Activated CD4-positive, alpha-beta T cell treated with anti-CD3 and anti-CD28 coated beads, Interleukin-2, amount 10 ng/mL, durations not matched to agents 24 days and 14 days (primary cell): ENCODE measurements at regions of chr2 and their contacts with region 1.

Region 1: DNA sequence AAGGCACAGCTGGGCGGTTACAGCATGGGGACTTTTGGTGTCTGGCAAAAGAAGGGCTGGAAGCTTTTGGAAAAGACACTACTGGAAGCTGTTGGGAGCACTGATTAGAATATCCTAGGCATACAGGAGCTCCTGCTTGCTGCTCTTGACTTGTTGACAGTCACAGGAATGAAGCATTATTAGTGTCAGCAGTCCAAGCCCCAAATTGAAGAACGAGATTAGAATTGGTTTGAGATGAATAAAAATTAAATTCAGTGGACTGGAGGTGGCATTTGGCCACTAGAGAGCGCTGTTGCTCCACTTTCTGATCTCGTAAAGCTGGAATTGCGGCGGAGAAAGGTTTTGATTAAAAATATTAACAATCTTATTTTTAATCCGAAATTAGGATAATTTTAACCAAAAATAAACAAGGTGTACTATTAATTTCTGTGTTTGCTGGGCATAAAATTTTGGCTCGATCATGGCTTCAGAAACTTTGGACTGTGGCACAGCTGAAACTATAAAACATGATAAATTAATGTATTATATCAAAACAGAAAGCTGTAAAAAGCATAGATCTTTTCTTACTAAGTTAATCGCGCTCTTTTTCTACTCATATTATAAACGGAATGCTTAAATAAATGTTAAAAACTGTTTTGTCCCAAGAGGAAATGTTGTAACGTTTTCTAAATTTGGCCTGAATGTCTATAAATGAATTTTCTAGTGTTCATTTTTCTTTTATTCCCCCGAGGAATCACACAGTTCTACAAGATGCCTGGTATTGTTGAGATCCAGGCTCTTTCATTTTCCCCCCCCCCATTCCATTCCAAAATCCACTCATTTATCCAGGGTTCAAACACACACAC is 2.4 kb upstream of the HOXD8 start:
- DNase-seq: peak; percentile 87
- H3K4me3 Mint-ChIP-seq: no peak overlapping the region
- H3K27ac Mint-ChIP-seq: no peak overlapping the region
- H3K4me1 Mint-ChIP-seq: peaks cover 8% of the 10 kb centered on the region
- H3K27me3 Mint-ChIP-seq: peaks cover 74% of the 10 kb centered on the region

Region 2: DNA sequence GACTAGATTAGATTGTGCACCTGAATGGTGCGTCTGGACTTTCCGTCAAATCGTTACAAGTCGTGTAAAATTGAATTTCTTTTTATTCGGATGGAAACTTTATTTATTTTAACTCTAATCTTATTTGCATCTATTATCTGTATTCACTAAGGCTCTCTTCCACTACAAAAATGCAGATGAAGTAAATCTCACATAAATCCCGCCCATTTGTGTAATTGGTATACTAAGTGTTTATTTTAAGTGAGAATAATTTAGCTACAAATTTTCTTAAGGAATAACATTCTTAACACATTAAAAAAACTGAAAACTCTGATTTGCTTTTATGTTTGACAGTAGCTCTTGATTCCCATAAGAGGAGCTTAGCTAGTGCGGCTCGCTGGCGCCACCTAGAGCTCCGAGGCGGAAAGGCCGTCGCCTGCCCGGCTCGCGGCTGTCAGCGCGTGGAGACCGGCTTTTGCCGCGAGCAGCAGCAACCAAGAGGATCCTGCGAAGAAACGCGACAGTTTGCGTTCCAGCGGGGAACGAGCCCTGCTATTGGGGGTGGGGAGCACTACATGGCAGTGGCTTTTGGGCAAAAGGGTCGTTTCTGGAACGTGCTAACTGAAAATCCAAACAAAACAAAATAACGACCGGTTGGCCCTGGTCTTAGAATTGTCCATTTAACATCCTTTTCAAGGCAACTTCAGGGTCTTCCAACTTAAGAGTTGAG is 1785.7 kb before region 1 on chr2:
- intact Hi-C with region 1: loop called (anchors 10 kb)
- DNase-seq: peak; percentile 97
- H3K4me3 Mint-ChIP-seq: peak overlapping the region; percentile 62
- H3K27ac Mint-ChIP-seq: peak overlapping the region; percentile 81
- H3K4me1 Mint-ChIP-seq: peaks cover 26% of the 10 kb centered on the region
- H3K27me3 Mint-ChIP-seq: peaks cover 63% of the 10 kb centered on the region

Region 3: GRCh38 chr2:176110975-176111663 is 16.0 kb before region 1 on chr2:
- intact Hi-C with region 1: loop called (anchors 2 kb)
- DNase-seq: no peak
- H3K4me3 Mint-ChIP-seq: no peak overlapping the region
- H3K27ac Mint-ChIP-seq: peak overlapping the region; percentile 12
- H3K4me1 Mint-ChIP-seq: peaks cover 6% of the 10 kb centered on the region
- H3K27me3 Mint-ChIP-seq: peaks cover 76% of the 10 kb centered on the region

Region 4: GRCh38 chr2:176178038-176178756 is 51.0 kb after region 1 on chr2:
- intact Hi-C with region 1: loop called (anchors 5 kb)
- DNase-seq: no peak
- H3K4me3 Mint-ChIP-seq: peak overlapping the region; percentile 56
- H3K27ac Mint-ChIP-seq: no peak overlapping the region
- H3K4me1 Mint-ChIP-seq: peaks cover 4% of the 10 kb centered on the region
- H3K27me3 Mint-ChIP-seq: peaks cover 84% of the 10 kb centered on the region

Region 5: DNA sequence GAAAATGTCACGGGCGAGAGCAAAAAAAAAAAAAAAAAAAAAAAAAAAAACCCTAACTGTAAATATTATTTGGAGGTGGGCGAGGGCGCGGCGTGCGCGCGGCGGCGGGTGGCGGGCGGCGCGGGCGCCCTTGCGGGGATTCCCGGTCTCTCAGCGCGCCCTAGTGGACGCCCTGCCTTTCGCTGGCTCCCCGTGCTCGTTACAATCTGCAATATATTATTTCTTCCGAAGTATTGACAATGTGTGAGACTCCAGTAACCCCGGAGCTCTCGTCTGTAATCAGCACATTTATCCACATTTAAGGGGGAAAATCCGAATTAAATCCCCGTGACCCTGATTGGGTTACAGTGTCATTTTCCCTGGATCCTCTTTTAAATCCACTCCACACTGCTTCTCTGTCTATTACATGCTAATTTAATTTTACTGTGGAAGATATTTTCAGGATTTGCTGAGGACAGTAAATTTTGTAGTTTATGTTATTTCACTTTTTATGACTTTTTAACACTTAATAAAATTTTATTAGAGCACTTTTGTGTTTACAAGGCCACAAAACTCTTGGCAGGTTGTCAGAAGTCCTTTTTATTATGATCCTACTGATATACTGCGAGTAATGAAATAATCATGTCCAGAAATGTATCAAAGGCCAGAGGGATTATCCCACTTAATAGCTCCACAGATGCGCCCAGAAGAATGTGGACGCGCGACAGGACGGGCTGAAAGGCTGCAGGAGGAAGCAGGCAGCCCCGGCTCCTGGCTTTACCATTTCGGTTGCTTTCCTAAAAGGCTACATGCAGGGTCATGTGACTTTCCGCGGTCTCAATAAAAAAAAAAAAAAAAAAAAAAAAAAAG is 511.2 kb after region 1 on chr2:
- intact Hi-C with region 1: loop called (anchors 2 kb)
- DNase-seq: peak; percentile 87
- H3K4me3 Mint-ChIP-seq: peak overlapping the region; percentile 77
- H3K27ac Mint-ChIP-seq: no peak overlapping the region
- H3K4me1 Mint-ChIP-seq: peaks cover 5% of the 10 kb centered on the region
- H3K27me3 Mint-ChIP-seq: peaks cover 62% of the 10 kb centered on the region

Region 6: GRCh38 chr2:177148477-177149154 is 1021.5 kb after region 1 on chr2:
- intact Hi-C with region 1: loop called (anchors 2 kb)
- DNase-seq: peak; percentile 93
- H3K4me3 Mint-ChIP-seq: peak overlapping the region; percentile 89
- H3K27ac Mint-ChIP-seq: no peak overlapping the region
- H3K4me1 Mint-ChIP-seq: peaks cover 11% of the 10 kb centered on the region
- H3K27me3 Mint-ChIP-seq: peaks cover 58% of the 10 kb centered on the region